ENCODE measurements at regions of chr6 and their contacts with region 1.

Region 1: DNA sequence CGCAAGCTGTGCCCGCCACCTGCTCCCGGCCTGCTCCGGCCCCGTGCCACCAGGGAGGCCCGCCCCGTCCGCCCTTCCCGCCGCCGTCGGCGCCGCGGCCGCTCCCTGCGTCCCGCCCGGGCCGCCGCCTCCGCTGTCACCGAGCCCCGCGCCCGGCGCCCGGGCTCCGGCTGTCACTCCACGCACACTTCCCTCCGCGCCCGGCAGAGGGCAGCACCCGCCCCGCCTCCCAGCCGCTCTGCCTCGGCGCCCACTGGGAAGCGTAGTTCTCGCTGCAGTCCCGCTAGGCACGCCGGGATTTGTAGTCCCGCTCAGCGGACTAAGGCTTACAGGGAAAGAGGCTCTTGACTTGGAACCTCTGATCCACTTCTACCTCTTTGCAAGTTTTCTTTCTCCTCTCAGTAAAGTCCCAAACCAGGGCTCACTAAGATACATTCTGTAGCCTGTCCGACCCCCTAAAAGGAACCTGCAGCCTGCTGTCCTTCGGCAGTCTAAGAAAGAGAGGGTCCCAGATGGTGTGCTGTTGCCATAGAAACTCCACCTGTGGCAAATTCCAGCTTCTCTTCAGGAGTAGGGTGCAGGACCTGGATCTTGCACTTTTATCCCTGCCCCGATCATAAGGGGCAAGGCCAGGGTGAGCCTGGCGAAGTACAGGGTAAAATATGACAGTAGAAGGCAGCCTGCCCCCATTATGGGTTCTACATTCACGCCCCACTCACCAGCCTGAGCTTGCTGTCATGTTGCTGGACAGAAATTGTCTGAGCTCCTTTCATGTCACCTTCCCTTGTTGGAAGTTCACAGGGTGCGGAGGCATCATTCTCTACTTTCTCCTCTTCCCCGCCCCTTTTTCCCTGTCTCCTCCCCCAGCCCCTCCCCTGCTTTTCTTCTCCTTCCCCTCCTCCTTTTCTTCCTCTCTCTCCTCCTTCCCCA is at the start of gene TFEB:
- DNase-seq: peak; percentile 87 to 96 (median 94)
- ATAC-seq: peak; percentile 68
- H3K4me3 ChIP-seq: peak within 1 kb of the TSS; percentile 73 to 75
- H3K4me3 Mint-ChIP-seq: peak within 1 kb of the TSS; percentile 88
- H3K27ac ChIP-seq: peak within 1 kb of the TSS; percentile 48 to 83
- H3K27ac Mint-ChIP-seq: peak within 1 kb of the TSS; percentile 76
- H3K4me1 ChIP-seq: peaks cover 39% of the 10 kb centered on the region
- H3K4me1 Mint-ChIP-seq: peaks cover 33% of the 10 kb centered on the region
- H3K27me3 ChIP-seq: no peaks in the 10 kb centered on the region
- H3K27me3 Mint-ChIP-seq: no peaks in the 10 kb centered on the region
- CTCF ChIP-seq: peak; percentile 67
- total RNA-seq, gene TFEB: 10.2 to 12.7 TPM

Region 2: DNA sequence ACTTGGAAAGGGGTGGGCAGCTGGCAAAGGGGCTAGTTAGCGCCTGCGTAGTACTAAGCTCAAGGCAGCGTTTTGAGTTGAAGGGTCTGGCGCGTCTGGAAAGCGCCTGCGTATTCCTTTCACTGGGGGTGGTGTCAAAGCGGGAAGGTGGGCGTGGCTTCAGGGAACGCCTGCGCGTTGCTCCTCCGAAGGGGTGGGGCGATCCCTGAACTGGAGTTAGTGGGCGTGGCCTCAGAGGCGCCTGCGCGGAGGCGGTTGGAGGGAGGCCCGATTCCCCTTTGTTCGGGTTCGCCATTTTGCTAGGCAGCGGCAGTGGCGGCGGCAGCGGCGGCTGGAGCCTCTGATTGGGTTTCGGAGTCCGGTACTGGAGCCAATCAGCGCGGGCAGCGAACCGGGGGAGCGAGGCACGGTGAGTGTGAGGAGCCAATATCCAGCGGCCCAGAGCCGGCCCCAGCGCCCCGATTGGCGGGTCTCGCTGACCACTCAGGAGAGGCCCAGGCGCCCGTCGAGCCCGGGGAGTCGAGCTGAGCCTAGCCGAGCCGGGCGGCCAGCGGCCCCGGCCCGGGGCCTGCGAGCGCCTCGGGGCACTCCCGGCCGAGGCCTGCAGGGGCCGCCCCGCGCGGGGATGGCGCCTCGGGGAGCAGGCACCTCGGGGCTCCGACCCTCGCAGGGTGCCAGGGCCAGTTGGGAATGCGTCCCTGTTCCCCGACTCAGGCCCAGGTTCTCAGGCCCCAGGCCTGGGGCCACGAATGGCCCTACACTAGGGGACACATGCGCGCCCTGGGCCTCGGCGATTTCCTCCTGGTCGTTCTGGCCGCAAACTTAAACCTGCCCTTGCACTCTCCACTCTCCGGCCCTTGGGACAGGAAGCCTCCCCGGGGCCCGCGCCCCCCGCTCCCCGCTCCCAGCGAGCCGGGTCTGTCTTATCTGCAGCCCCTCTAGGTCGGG is 662.7 kb before region 1 on chr6 and contains the start of gene NFYA:
- CTCF ChIA-PET with region 1: no interaction called
- POLR2A ChIA-PET with region 1: no interaction called
- intact Hi-C with region 1: loop called (anchors 2 to 5 kb)
- DNase-seq: peak; percentile 99 to 100 (median 100)
- ATAC-seq: peak; percentile 70
- H3K4me3 ChIP-seq: peak within 1 kb of the TSS; percentile 72 to 86
- H3K4me3 Mint-ChIP-seq: peak within 1 kb of the TSS; percentile 92
- H3K27ac ChIP-seq: peak within 1 kb of the TSS; percentile 88 to 89
- H3K27ac Mint-ChIP-seq: peak within 1 kb of the TSS; percentile 95
- H3K4me1 ChIP-seq: peaks cover 37% of the 10 kb centered on the region
- H3K4me1 Mint-ChIP-seq: peaks cover 55% of the 10 kb centered on the region
- H3K27me3 ChIP-seq: no peaks in the 10 kb centered on the region
- H3K27me3 Mint-ChIP-seq: no peaks in the 10 kb centered on the region
- CTCF ChIP-seq: peak; percentile 46
- total RNA-seq, gene NFYA: 31.7 to 32.7 TPM

Region 3: DNA sequence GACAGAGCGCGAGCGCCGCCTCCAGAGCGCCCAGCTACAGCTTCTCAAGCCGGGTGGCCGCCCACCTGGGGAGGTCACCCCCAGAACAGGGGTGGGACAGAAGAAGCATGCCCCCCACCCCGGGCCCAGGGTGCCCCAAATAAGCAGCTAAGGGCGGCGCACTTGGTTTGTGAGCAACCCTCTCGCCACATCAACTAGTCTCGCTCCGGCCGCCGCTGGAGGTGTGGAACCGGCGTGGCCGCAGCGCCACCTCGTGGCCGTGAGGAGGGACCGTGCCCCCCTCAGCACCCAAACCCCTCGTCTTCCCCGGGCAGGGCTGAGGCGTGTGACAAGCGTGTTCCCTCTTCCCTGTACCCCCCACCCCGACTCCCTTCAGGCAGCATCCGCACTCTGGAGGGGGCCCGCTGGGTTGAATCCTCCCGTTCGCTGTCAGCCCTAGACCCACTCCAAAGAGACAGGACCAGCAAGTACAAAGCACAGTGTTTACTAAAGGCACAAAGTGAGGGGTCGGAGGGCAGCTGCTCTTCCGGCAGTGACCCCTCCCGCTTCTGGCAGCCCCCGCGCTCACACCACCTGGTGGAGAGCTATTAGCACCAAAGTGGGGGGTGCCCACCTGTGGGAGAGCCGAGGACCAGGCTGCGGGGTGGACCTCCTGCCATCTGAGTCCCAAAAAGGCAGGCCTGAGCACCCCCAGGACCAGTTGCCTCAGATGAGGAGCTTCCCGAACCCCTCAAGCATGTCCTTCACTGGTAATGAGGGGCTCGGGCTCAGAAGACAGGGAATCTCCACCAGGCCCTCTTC is 52.0 kb before region 1 on chr6:
- CTCF ChIA-PET with region 1: interaction called, 20 read pairs
- POLR2A ChIA-PET with region 1: no interaction called
- intact Hi-C with region 1: no loop called
- DNase-seq: peak; percentile 70 to 88 (median 79)
- ATAC-seq: peak; percentile 91
- H3K4me3 ChIP-seq: peak overlapping the region; percentile 35 to 47
- H3K4me3 Mint-ChIP-seq: peak overlapping the region; percentile 77
- H3K27ac ChIP-seq: peak overlapping the region; percentile 39 to 48
- H3K27ac Mint-ChIP-seq: peak overlapping the region; percentile 76
- H3K4me1 ChIP-seq: peaks cover 3% of the 10 kb centered on the region
- H3K4me1 Mint-ChIP-seq: peaks cover 8% of the 10 kb centered on the region
- H3K27me3 ChIP-seq: peaks cover 0 to 2% of the 10 kb centered on the region in 2 experiments
- H3K27me3 Mint-ChIP-seq: peaks cover 1% of the 10 kb centered on the region
- CTCF ChIP-seq: peak; percentile 76

Region 4: GRCh38 chr6:41787219-41787917 is 51.7 kb after region 1 on chr6 and contains the start of gene TOMM6:
- CTCF ChIA-PET with region 1: interaction called, 5 read pairs
- POLR2A ChIA-PET with region 1: interaction called, 12 read pairs
- intact Hi-C with region 1: loop called (anchors 1 kb)
- DNase-seq: peak; percentile 90 to 97 (median 96)
- ATAC-seq: peak; percentile 78
- H3K4me3 ChIP-seq: peak within 1 kb of the TSS; percentile 80 to 96
- H3K4me3 Mint-ChIP-seq: peak within 1 kb of the TSS; percentile 97
- H3K27ac ChIP-seq: peak within 1 kb of the TSS; percentile 89 to 94
- H3K27ac Mint-ChIP-seq: peak within 1 kb of the TSS; percentile 99
- H3K4me1 ChIP-seq: peaks cover 6% of the 10 kb centered on the region
- H3K4me1 Mint-ChIP-seq: peaks cover 15% of the 10 kb centered on the region
- H3K27me3 ChIP-seq: no peaks in the 10 kb centered on the region
- H3K27me3 Mint-ChIP-seq: no peaks in the 10 kb centered on the region
- CTCF ChIP-seq: peak; percentile 78
- total RNA-seq, gene TOMM6: 94.3 to 101 TPM

Region 5: GRCh38 chr6:41859356-41859755 is 123.7 kb after region 1 on chr6:
- CTCF ChIA-PET with region 1: no interaction called
- POLR2A ChIA-PET with region 1: no interaction called
- intact Hi-C with region 1: no loop called
- DNase-seq: no peak
- ATAC-seq: no peak
- H3K4me3 ChIP-seq: no peak overlapping the region
- H3K4me3 Mint-ChIP-seq: no peak overlapping the region
- H3K27ac ChIP-seq: no peak overlapping the region
- H3K27ac Mint-ChIP-seq: no peak overlapping the region
- H3K4me1 ChIP-seq: no peaks in the 10 kb centered on the region
- H3K4me1 Mint-ChIP-seq: no peaks in the 10 kb centered on the region
- H3K27me3 ChIP-seq: no peaks in the 10 kb centered on the region
- H3K27me3 Mint-ChIP-seq: no peaks in the 10 kb centered on the region
- CTCF ChIP-seq: no peak

Region 6: GRCh38 chr6:41936073-41936837 is 200.6 kb after region 1 on chr6:
- CTCF ChIA-PET with region 1: no interaction called
- POLR2A ChIA-PET with region 1: no interaction called
- intact Hi-C with region 1: loop called in 1 of 2 experiments (anchors 5 kb)
- DNase-seq: peak; percentile 42 to 95 (median 71)
- ATAC-seq: peak; percentile 60
- H3K4me3 ChIP-seq: peak overlapping the region; percentile 9 to 13
- H3K4me3 Mint-ChIP-seq: peak overlapping the region; percentile 78
- H3K27ac ChIP-seq: peak overlapping the region; percentile 8 to 63
- H3K27ac Mint-ChIP-seq: peak overlapping the region; percentile 90
- H3K4me1 ChIP-seq: peaks cover 63% of the 10 kb centered on the region
- H3K4me1 Mint-ChIP-seq: peaks cover 72% of the 10 kb centered on the region
- H3K27me3 ChIP-seq: no peaks in the 10 kb centered on the region
- H3K27me3 Mint-ChIP-seq: no peaks in the 10 kb centered on the region
- CTCF ChIP-seq: peak; percentile 66

Region 7: GRCh38 chr6:43174263-43175112 is 1438.8 kb after region 1 on chr6:
- CTCF ChIA-PET with region 1: no interaction called
- POLR2A ChIA-PET with region 1: no interaction called
- intact Hi-C with region 1: loop called in 1 of 2 experiments (anchors 10 kb)
- DNase-seq: peak; percentile 77 to 98 (median 92)
- ATAC-seq: peak; percentile 52
- H3K4me3 ChIP-seq: peak overlapping the region; percentile 4 to 50
- H3K4me3 Mint-ChIP-seq: peak overlapping the region; percentile 63
- H3K27ac ChIP-seq: peak overlapping the region; percentile 62 to 89
- H3K27ac Mint-ChIP-seq: peak overlapping the region; percentile 95
- H3K4me1 ChIP-seq: peaks cover 40% of the 10 kb centered on the region
- H3K4me1 Mint-ChIP-seq: peaks cover 45% of the 10 kb centered on the region
- H3K27me3 ChIP-seq: no peaks in the 10 kb centered on the region
- H3K27me3 Mint-ChIP-seq: no peaks in the 10 kb centered on the region
- CTCF ChIP-seq: no peak

Region 8: DNA sequence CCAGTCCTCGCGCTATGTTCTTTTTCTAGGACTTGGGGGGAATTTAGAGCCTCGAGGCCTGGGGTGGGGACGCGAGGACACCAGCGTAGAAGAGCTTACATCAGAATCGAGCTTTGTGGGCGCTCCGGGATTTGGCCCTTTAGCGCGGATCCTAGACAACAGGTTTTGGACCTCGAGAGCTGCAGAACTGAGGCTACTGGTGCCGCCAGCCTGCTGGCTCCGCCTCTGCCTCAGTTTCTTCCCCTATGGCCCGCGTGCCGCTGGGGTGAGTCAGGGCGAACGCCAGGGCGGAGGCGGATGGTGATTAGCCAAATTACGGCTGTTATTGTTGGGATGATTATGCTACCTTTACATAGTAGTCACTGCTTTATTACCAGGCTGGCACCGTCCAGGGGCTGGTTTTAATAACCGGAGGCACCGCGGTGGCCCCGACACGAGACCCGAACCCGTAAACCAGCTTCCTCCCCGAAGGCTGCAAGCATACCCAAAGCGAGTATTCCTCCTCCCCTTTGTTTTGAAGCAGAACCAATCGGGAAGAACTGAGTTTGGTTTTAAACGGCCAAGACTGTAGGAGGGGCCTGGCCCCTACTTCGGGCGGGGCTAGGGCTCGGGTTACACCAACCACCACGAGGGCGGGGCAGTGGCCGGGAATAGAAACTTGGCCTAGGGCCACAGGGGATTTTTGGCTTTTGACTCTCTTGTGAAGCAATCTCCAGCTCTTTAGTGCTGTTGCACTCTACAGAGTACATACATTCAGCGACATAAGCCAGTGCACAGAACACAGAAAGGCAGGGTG is 1894.0 kb after region 1 on chr6:
- CTCF ChIA-PET with region 1: no interaction called
- POLR2A ChIA-PET with region 1: no interaction called
- intact Hi-C with region 1: loop called in 1 of 2 experiments (anchors 10 kb)
- DNase-seq: peak; percentile 66 to 96 (median 84)
- ATAC-seq: peak; percentile 51
- H3K4me3 ChIP-seq: peak overlapping the region; percentile 77 to 82
- H3K4me3 Mint-ChIP-seq: peak overlapping the region; percentile 98
- H3K27ac ChIP-seq: peak overlapping the region; percentile 53 to 75
- H3K27ac Mint-ChIP-seq: peak overlapping the region; percentile 95
- H3K4me1 ChIP-seq: peaks cover 15% of the 10 kb centered on the region
- H3K4me1 Mint-ChIP-seq: peaks cover 39% of the 10 kb centered on the region
- H3K27me3 ChIP-seq: no peaks in the 10 kb centered on the region
- H3K27me3 Mint-ChIP-seq: no peaks in the 10 kb centered on the region
- CTCF ChIP-seq: no peak